Naive thymus-derived CD4-positive, alpha-beta T cell (primary cell): ENCODE measurements at regions of chrX and their contacts with region 1.

Region 1: GRCh38 chrX:103845165-103845653 is 13.2 kb upstream of the RAB9B start:
- DNase-seq: peak in 7 of 9 donors; percentile 8 to 33 (median 25)
- ATAC-seq: no peak
- H3K4me3 ChIP-seq: no peak overlapping the region
- H3K4me3 Mint-ChIP-seq: no peak overlapping the region
- H3K27ac ChIP-seq: no peak overlapping the region
- H3K27ac Mint-ChIP-seq: no peak overlapping the region
- H3K4me1 ChIP-seq: no peaks in the 10 kb centered on the region
- H3K4me1 Mint-ChIP-seq: no peaks in the 10 kb centered on the region
- H3K27me3 ChIP-seq: no peaks in the 10 kb centered on the region
- H3K27me3 Mint-ChIP-seq: peaks cover 0 to 5% (median 0%) of the 10 kb centered on the region in 5 donors

Region 2: GRCh38 chrX:102966701-102967100 is 878.5 kb before region 1 on chrX:
- CTCF ChIA-PET with region 1: no interaction called
- POLR2A ChIA-PET with region 1: no interaction called
- intact Hi-C with region 1: no loop called
- DNase-seq: no peak
- ATAC-seq: no peak
- H3K4me3 ChIP-seq: no peak overlapping the region
- H3K4me3 Mint-ChIP-seq: no peak overlapping the region
- H3K27ac ChIP-seq: no peak overlapping the region
- H3K27ac Mint-ChIP-seq: no peak overlapping the region
- H3K4me1 ChIP-seq: no peaks in the 10 kb centered on the region
- H3K4me1 Mint-ChIP-seq: no peaks in the 10 kb centered on the region
- H3K27me3 ChIP-seq: no peaks in the 10 kb centered on the region
- H3K27me3 Mint-ChIP-seq: no peaks in the 10 kb centered on the region

Region 3: GRCh38 chrX:103686199-103687072 is 158.8 kb before region 1 on chrX and contains the start of gene MORF4L2:
- CTCF ChIA-PET with region 1: no interaction called
- POLR2A ChIA-PET with region 1: no interaction called
- intact Hi-C with region 1: no loop called
- DNase-seq: peak; percentile 42 to 96 (median 89)
- ATAC-seq: peak; percentile 90
- H3K4me3 ChIP-seq: peak within 1 kb of the TSS; percentile 83
- H3K4me3 Mint-ChIP-seq: peak within 1 kb of the TSS in 6 of 10 donors; percentile 69 to 91 (median 82)
- H3K27ac ChIP-seq: peak within 1 kb of the TSS; percentile 94
- H3K27ac Mint-ChIP-seq: peak within 1 kb of the TSS in 5 of 9 donors; percentile 77 to 92 (median 81)
- H3K4me1 ChIP-seq: peaks cover 4 to 13% of the 10 kb centered on the region in 2 donors
- H3K4me1 Mint-ChIP-seq: peaks cover 0 to 23% (median 10%) of the 10 kb centered on the region in 7 donors
- H3K27me3 ChIP-seq: no peaks in the 10 kb centered on the region
- H3K27me3 Mint-ChIP-seq: no peaks in the 10 kb centered on the region
- total RNA-seq, gene MORF4L2: 103 to 177 (median 143) TPM

Region 4: GRCh38 chrX:103941201-103941975 is 96.2 kb after region 1 on chrX:
- CTCF ChIA-PET with region 1: interaction called, 7 read pairs
- POLR2A ChIA-PET with region 1: no interaction called
- intact Hi-C with region 1: loop called (anchors 1 kb)
- DNase-seq: peak in 3 of 9 donors; percentile 10 to 36 (median 18)
- ATAC-seq: no peak
- H3K4me3 ChIP-seq: no peak overlapping the region
- H3K4me3 Mint-ChIP-seq: no peak overlapping the region
- H3K27ac ChIP-seq: no peak overlapping the region
- H3K27ac Mint-ChIP-seq: no peak overlapping the region
- H3K4me1 ChIP-seq: no peaks in the 10 kb centered on the region
- H3K4me1 Mint-ChIP-seq: peaks cover 0 to 28% (median 5%) of the 10 kb centered on the region in 7 donors
- H3K27me3 ChIP-seq: no peaks in the 10 kb centered on the region
- H3K27me3 Mint-ChIP-seq: no peaks in the 10 kb centered on the region

Region 5: DNA sequence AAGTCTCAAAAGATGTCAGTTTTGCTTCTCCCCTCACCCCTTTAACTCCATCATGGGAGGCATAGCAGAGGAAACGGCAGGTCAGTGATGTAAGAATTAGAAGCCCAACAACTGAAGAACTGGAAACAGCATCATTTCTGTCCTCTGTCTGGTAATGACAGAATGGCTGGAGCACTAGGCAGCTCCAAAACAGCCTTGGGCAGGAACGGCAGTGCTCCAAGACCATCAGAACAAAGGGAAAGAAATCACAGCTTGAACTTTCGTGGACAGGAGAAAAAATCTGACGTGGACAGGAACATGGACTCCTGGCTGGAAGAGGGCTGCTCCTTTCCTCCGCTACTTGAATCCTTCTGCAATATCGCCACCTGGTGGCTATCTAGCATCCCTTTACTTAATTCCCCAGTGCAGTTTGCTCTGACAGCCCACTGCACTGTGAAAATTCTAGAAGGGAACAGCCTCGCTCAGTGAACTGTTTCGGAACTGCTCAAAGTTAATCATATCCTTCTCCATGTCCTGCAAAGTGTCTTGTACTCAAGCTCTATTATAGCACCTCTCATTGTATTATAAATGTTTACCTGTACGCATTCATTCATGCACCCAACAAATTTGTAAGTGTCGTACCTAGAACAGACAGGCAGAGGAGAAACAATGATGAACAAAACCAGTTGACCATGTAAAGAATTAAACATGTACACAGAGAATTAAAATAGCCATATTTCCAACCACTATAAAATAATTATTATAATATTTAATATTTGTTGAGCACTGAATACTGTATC is 291.2 kb after region 1 on chrX:
- CTCF ChIA-PET with region 1: no interaction called
- POLR2A ChIA-PET with region 1: no interaction called
- intact Hi-C with region 1: loop called (anchors 1 kb)
- DNase-seq: peak in 8 of 9 donors; percentile 28 to 62 (median 49)
- ATAC-seq: peak; percentile 81
- H3K4me3 ChIP-seq: no peak overlapping the region
- H3K4me3 Mint-ChIP-seq: peak overlapping the region in 1 of 10 donors; percentile 25
- H3K27ac ChIP-seq: no peak overlapping the region
- H3K27ac Mint-ChIP-seq: no peak overlapping the region
- H3K4me1 ChIP-seq: peaks cover 0 to 6% of the 10 kb centered on the region in 2 donors
- H3K4me1 Mint-ChIP-seq: peaks cover 13 to 31% (median 21%) of the 10 kb centered on the region in 7 donors
- H3K27me3 ChIP-seq: no peaks in the 10 kb centered on the region
- H3K27me3 Mint-ChIP-seq: no peaks in the 10 kb centered on the region

Region 6: DNA sequence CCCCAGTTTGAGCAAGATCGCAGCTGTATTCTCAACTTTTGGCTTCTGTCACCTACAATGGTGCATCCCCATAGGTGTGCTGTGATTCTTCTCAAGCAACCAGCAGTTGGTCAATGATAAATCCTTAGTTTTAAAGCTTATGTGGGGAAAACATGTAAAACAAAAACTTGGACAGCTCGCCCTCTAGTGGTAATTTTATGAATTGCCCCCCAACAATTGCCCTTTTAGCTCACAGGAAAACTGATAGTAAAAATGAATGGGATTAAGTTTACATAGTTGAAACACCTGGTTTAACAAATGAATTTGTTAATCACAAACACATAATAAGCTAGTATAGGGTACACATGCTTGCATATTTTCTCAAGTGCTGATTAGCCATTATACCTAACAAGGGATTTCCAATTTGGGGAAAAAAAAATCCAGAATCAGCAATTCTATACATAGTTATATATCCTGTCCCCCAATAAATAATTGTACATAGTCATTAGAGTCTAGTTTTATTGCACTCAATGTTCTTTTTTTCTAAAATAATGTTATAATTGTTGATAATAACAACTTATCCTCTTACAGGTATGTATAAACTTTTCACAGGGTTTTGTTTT is 1345.1 kb after region 1 on chrX:
- CTCF ChIA-PET with region 1: no interaction called
- POLR2A ChIA-PET with region 1: no interaction called
- intact Hi-C with region 1: loop called in 1 of 2 experiments (anchors 10 kb)
- DNase-seq: peak in 4 of 9 donors; percentile 15 to 28 (median 22)
- ATAC-seq: no peak
- H3K4me3 ChIP-seq: no peak overlapping the region
- H3K4me3 Mint-ChIP-seq: no peak overlapping the region
- H3K27ac ChIP-seq: no peak overlapping the region
- H3K27ac Mint-ChIP-seq: no peak overlapping the region
- H3K4me1 ChIP-seq: no peaks in the 10 kb centered on the region
- H3K4me1 Mint-ChIP-seq: no peaks in the 10 kb centered on the region
- H3K27me3 ChIP-seq: no peaks in the 10 kb centered on the region
- H3K27me3 Mint-ChIP-seq: peaks cover 0 to 5% (median 0%) of the 10 kb centered on the region in 5 donors

Region 7: GRCh38 chrX:105375816-105376215 is 1530.6 kb after region 1 on chrX:
- CTCF ChIA-PET with region 1: no interaction called
- POLR2A ChIA-PET with region 1: no interaction called
- intact Hi-C with region 1: no loop called
- DNase-seq: no peak
- ATAC-seq: no peak
- H3K4me3 ChIP-seq: no peak overlapping the region
- H3K4me3 Mint-ChIP-seq: no peak overlapping the region
- H3K27ac ChIP-seq: no peak overlapping the region
- H3K27ac Mint-ChIP-seq: no peak overlapping the region
- H3K4me1 ChIP-seq: no peaks in the 10 kb centered on the region
- H3K4me1 Mint-ChIP-seq: no peaks in the 10 kb centered on the region
- H3K27me3 ChIP-seq: no peaks in the 10 kb centered on the region
- H3K27me3 Mint-ChIP-seq: no peaks in the 10 kb centered on the region